ENCODE measurements at regions of chr17 and their contacts with region 1.

Region 1: DNA sequence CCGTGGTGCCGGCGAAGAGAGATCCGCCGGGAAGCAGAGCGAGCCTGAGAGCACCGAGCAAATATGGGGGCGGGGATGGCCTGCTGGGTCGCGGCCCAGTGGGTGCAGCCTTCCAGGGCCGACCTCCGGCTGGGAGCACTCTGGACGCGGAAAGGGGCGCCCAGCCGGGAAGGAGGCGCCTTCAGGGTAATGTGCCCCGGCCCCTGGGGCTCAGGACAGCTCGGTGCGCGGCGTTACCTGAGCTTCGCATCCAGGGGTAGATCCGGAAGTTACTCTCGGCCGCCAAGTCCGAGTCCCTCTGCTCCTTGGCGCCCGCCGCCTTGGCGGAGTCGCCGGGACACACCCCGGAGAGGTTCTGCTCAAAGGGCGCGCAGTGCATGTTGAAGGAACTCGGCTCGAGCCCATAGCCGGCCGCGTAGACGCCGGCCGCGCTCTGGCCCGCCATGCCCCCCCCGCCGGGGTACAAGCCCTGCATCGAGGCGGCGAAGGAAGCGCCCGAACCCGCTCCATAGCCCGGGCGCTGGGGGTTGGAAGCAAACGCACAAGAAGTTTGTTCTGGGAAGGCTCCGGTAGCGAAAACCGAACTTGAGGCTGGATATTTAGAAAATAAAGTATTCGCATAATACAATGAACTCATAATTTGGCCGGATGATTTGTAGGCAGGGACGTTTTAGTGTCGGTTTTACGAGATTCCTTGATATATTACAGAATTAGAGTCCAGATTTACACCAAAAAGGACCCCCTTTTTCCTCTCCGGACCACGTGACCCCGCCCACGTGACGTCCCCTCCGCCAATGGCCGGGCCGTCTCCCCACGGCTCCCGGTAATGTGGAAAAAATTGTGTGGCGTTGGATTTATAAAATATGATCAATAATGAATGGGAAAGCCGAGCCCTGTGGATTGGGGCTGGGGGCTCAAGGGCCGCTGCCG is at the start of gene HOXB7:
- DNase-seq: peak; percentile 81
- ATAC-seq: peak; percentile 54
- H3K4me3 Mint-ChIP-seq: peak within 1 kb of the TSS; percentile 81
- H3K27ac Mint-ChIP-seq: peak within 1 kb of the TSS; percentile 22
- H3K4me1 Mint-ChIP-seq: peaks cover 35% of the 10 kb centered on the region
- H3K27me3 Mint-ChIP-seq: peaks cover 79% of the 10 kb centered on the region
- total RNA-seq, gene HOXB7: 1.7 TPM

Region 2: DNA sequence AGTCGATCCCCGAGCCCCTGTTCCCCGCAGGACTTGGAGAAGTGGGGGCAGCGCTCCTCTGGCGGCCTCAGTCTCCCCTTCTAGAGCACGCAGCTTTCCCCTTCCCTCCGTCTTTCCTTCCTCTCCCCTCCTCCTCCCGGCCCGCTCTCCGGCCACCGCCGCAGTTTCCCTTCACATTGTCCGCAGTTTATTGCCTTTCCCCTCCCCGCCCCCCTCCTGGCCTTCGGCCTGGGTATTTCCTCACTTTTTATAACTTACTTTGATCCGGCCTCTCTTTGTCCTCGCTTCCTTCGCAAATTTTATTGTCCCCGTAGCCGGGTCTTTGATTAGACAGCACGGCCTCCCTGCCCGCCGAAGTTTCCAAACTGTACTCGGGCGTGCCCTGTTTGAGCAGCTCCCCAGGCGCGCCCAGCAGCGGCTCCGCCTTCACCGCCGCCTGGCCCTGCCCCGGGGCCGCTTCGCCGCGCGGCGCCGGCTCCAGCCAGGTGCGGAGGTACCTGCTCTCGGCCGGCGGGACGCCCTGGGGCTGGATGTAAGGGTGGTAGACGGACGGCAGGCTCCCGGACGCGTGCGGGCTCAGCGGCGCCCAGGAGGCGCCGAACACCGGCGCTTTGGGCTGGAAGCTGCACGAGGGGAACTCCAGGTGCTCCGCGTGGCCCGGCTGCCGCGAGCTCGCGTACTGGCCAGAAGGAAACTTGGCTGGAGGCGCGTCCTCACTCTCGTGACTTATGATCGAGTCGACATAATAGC is 15.1 kb after region 1 on chr17:
- CTCF ChIA-PET with region 1: interaction called, 23 read pairs
- DNase-seq: peak; percentile 60
- ATAC-seq: peak; percentile 75
- H3K4me3 Mint-ChIP-seq: peak overlapping the region; percentile 75
- H3K27ac Mint-ChIP-seq: peak overlapping the region; percentile 76
- H3K4me1 Mint-ChIP-seq: peaks cover 19% of the 10 kb centered on the region
- H3K27me3 Mint-ChIP-seq: peaks cover 84% of the 10 kb centered on the region

Measured in activated CD8-positive, alpha-beta memory T cell treated with anti-CD3 and anti-CD28 coated beads, Interleukin-2, amount 10 ng/mL, durations not matched to agents 7 days and 5 days (primary cell).